CD8-positive, alpha-beta T cell (primary cell): ENCODE measurements at regions of chrX and their contacts with region 1.

Region 1: GRCh38 chrX:17744896-17745523 is 7.7 kb downstream of the SCML1 start:
- DNase-seq: peak in 1 of 9 experiments; percentile 24
- ATAC-seq: no peak
- H3K4me3 ChIP-seq: no peak overlapping the region
- H3K4me3 Mint-ChIP-seq: no peak overlapping the region
- H3K27ac ChIP-seq: no peak overlapping the region
- H3K27ac Mint-ChIP-seq: no peak overlapping the region
- H3K4me1 ChIP-seq: peaks cover 11% of the 10 kb centered on the region
- H3K4me1 Mint-ChIP-seq: peaks cover 41% of the 10 kb centered on the region
- H3K27me3 ChIP-seq: no peaks in the 10 kb centered on the region
- H3K27me3 Mint-ChIP-seq: no peaks in the 10 kb centered on the region
- CTCF ChIP-seq: peak; percentile 40

Region 2: GRCh38 chrX:17187136-17187756 is 557.8 kb before region 1 on chrX:
- CTCF ChIA-PET with region 1: no interaction called
- POLR2A ChIA-PET with region 1: no interaction called
- intact Hi-C with region 1: no loop called
- DNase-seq: no peak
- ATAC-seq: no peak
- H3K4me3 ChIP-seq: no peak overlapping the region
- H3K4me3 Mint-ChIP-seq: no peak overlapping the region
- H3K27ac ChIP-seq: no peak overlapping the region
- H3K27ac Mint-ChIP-seq: no peak overlapping the region
- H3K4me1 ChIP-seq: no peaks in the 10 kb centered on the region
- H3K4me1 Mint-ChIP-seq: no peaks in the 10 kb centered on the region
- H3K27me3 ChIP-seq: no peaks in the 10 kb centered on the region
- H3K27me3 Mint-ChIP-seq: no peaks in the 10 kb centered on the region
- CTCF ChIP-seq: no peak

Region 3: GRCh38 chrX:17697191-17697590 is 47.8 kb before region 1 on chrX:
- CTCF ChIA-PET with region 1: no interaction called
- POLR2A ChIA-PET with region 1: no interaction called
- intact Hi-C with region 1: loop called in 1 of 2 experiments (anchors 5 kb)
- DNase-seq: peak in 2 of 9 experiments; percentile 5 to 29
- ATAC-seq: no peak
- H3K4me3 ChIP-seq: no peak overlapping the region
- H3K4me3 Mint-ChIP-seq: no peak overlapping the region
- H3K27ac ChIP-seq: no peak overlapping the region
- H3K27ac Mint-ChIP-seq: no peak overlapping the region
- H3K4me1 ChIP-seq: no peaks in the 10 kb centered on the region
- H3K4me1 Mint-ChIP-seq: no peaks in the 10 kb centered on the region
- H3K27me3 ChIP-seq: no peaks in the 10 kb centered on the region
- H3K27me3 Mint-ChIP-seq: no peaks in the 10 kb centered on the region
- CTCF ChIP-seq: no peak

Region 4: DNA sequence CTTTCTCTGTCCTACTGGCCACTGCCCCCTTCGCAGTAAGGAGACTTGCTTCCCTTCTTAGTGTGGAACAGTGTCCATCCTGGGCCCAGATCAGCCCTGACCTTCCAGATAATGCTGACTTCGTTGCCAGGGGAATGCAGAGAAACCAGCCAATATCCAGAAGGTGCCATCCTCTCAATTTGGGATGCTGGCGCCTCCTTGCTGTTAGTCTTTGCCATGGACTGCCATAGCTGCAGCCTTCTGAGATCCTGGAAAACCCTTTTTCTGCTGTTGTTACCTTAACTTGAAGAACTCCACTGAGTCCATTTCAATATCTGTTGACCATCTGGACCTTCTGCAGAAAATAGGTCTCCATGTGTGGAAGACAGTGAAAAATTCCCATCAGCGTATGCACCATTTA is 94.3 kb after region 1 on chrX:
- CTCF ChIA-PET with region 1: no interaction called
- POLR2A ChIA-PET with region 1: no interaction called
- intact Hi-C with region 1: loop called in 1 of 2 experiments (anchors 10 kb)
- DNase-seq: no peak
- ATAC-seq: no peak
- H3K4me3 ChIP-seq: no peak overlapping the region
- H3K4me3 Mint-ChIP-seq: no peak overlapping the region
- H3K27ac ChIP-seq: no peak overlapping the region
- H3K27ac Mint-ChIP-seq: no peak overlapping the region
- H3K4me1 ChIP-seq: no peaks in the 10 kb centered on the region
- H3K4me1 Mint-ChIP-seq: no peaks in the 10 kb centered on the region
- H3K27me3 ChIP-seq: no peaks in the 10 kb centered on the region
- H3K27me3 Mint-ChIP-seq: peaks cover 3% of the 10 kb centered on the region
- CTCF ChIP-seq: no peak

Region 5: GRCh38 chrX:18210470-18210869 is 465.5 kb after region 1 on chrX:
- CTCF ChIA-PET with region 1: no interaction called
- POLR2A ChIA-PET with region 1: no interaction called
- intact Hi-C with region 1: loop called in 1 of 2 experiments (anchors 2 kb)
- DNase-seq: peak in 1 of 9 experiments; percentile 7
- ATAC-seq: no peak
- H3K4me3 ChIP-seq: no peak overlapping the region
- H3K4me3 Mint-ChIP-seq: no peak overlapping the region
- H3K27ac ChIP-seq: no peak overlapping the region
- H3K27ac Mint-ChIP-seq: no peak overlapping the region
- H3K4me1 ChIP-seq: no peaks in the 10 kb centered on the region
- H3K4me1 Mint-ChIP-seq: no peaks in the 10 kb centered on the region
- H3K27me3 ChIP-seq: no peaks in the 10 kb centered on the region
- H3K27me3 Mint-ChIP-seq: peaks cover 2% of the 10 kb centered on the region
- CTCF ChIP-seq: no peak

Region 6: DNA sequence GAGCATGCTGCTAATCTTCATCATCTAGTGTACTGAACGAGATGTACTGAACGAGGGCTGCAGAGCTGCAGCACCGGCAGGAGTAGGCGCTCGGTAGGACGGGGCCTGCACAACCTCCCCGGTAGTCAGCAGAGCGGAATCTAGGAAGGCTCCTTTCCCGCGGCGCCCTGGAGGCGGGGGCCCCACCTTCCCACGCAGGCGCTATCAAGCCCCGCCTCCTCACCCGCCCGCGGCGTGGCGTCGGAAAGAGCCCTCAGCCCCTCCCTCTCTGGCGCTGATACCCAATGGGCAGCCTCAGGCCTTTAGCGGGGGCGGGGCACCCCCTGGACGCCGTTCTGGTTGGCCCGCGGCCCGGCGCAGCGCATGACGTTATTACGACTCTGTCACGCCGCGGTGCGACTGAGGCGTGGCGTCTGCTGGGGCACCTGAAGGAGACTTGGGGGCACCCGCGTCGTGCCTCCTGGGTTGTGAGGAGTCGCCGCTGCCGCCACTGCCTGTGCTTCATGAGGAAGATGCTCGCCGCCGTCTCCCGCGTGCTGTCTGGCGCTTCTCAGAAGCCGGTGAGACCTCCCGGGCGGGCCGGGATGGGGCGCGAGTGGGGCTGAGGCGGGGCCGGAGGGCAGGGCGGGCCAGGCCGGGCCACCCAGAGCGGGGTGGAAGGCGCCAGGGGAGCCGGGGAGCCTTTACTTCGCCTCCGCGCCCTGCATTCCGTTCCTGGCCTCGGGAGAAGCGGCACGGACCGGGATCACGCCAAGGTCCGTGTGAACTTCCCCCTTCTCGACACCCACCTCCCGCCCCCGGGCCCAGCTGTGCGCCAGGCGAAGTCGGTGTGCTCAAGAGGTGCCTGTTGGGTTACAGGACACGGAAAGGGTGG is 1598.8 kb after region 1 on chrX and contains the start of gene PDHA1:
- CTCF ChIA-PET with region 1: no interaction called
- POLR2A ChIA-PET with region 1: no interaction called
- intact Hi-C with region 1: loop called in 1 of 2 experiments (anchors 5 kb)
- DNase-seq: peak; percentile 83 to 96 (median 92)
- ATAC-seq: peak; percentile 97
- H3K4me3 ChIP-seq: peak within 1 kb of the TSS; percentile 62 to 71
- H3K4me3 Mint-ChIP-seq: peak within 1 kb of the TSS; percentile 86
- H3K27ac ChIP-seq: peak within 1 kb of the TSS; percentile 77 to 82
- H3K27ac Mint-ChIP-seq: peak within 1 kb of the TSS; percentile 92
- H3K4me1 ChIP-seq: peaks cover 15% of the 10 kb centered on the region
- H3K4me1 Mint-ChIP-seq: peaks cover 23% of the 10 kb centered on the region
- H3K27me3 ChIP-seq: no peaks in the 10 kb centered on the region
- H3K27me3 Mint-ChIP-seq: no peaks in the 10 kb centered on the region
- CTCF ChIP-seq: no peak
- total RNA-seq, gene PDHA1: 107 to 115 TPM